GM12878 (cell line): ENCODE measurements at regions of chr21 and their contacts with region 1.

Region 1: DNA sequence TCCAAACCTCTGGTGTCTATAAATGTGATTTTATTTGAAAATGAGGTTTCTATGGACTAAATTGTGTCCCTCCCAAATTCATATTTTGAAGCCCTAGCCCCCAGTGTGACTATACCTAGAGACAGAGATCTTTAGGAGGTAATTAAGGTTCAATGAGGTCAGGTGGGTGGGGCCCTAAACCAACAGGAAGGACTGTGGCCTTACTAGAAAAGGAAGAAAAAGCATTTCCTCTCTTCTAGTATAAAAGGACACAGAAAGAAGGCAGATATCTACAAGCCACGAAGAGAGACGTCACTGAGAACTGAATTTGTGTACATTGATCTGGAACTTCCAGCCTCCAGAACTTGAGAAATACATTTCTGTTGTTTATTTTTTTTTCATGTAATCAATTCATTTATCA is 123.1 kb upstream of the RUNX1 start:
- DNase-seq: no peak
- ATAC-seq: no peak
- H3K4me3 ChIP-seq: no peak overlapping the region
- H3K27ac ChIP-seq: no peak overlapping the region
- H3K4me1 ChIP-seq: no peaks in the 10 kb centered on the region
- H3K27me3 ChIP-seq: no peaks in the 10 kb centered on the region
- CTCF ChIP-seq: no peak
- EP300 ChIP-seq: no peak
- POLR2A ChIP-seq: no peak
- RAD21 ChIP-seq: no peak

Region 2: DNA sequence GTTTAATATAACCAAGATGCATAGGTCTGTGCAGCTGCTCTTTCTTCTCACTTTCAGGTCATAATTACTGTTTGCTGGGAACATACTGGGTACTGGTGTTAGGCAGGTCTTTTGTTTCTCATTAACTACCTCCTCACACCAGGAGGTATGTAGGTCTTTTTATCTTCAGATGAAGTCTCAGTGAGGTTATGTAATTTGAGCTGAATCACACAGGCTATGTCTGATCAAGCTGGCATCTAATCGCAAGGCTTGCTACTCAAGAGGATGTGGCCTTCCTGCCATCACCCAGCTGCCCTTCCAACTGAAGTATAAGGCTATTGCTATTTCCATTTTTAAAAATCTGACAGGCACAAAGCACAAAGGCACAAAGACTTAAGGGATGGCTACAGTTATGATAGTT is 219.5 kb before region 1 on chr21:
- CTCF ChIA-PET with region 1: no interaction called
- POLR2A ChIA-PET with region 1: no interaction called
- RAD21 ChIA-PET with region 1: no interaction called
- SMC1A ChIA-PET with region 1: no interaction called
- in situ Hi-C with region 1: no loop called
- intact Hi-C with region 1: no loop called
- DNase-seq: no peak
- ATAC-seq: no peak
- H3K4me3 ChIP-seq: no peak overlapping the region
- H3K27ac ChIP-seq: no peak overlapping the region
- H3K4me1 ChIP-seq: no peaks in the 10 kb centered on the region
- H3K27me3 ChIP-seq: no peaks in the 10 kb centered on the region
- CTCF ChIP-seq: no peak
- EP300 ChIP-seq: no peak
- POLR2A ChIP-seq: no peak
- RAD21 ChIP-seq: no peak

Region 3: GRCh38 chr21:35051287-35051818 is 120.9 kb before region 1 on chr21:
- CTCF ChIA-PET with region 1: no interaction called
- POLR2A ChIA-PET with region 1: no interaction called
- RAD21 ChIA-PET with region 1: no interaction called
- SMC1A ChIA-PET with region 1: no interaction called
- in situ Hi-C with region 1: no loop called
- intact Hi-C with region 1: no loop called
- DNase-seq: no peak
- ATAC-seq: peak; percentile 34; the same call in 2 of the 3 replicates
- H3K4me3 ChIP-seq: no peak overlapping the region
- H3K27ac ChIP-seq: peak overlapping the region; percentile 23; the same call in 1 of the 2 replicates
- H3K4me1 ChIP-seq: peaks cover 41% of the 10 kb centered on the region
- H3K27me3 ChIP-seq: peaks cover 0 to 1% of the 10 kb centered on the region in 2 experiments; a peak in 1 of 4 replicates
- CTCF ChIP-seq: peak; percentile 16 to 32 (median 31); a peak in 4 of 6 replicates
- EP300 ChIP-seq: no peak
- POLR2A ChIP-seq: no peak
- RAD21 ChIP-seq: peak; percentile 69

Region 4: DNA sequence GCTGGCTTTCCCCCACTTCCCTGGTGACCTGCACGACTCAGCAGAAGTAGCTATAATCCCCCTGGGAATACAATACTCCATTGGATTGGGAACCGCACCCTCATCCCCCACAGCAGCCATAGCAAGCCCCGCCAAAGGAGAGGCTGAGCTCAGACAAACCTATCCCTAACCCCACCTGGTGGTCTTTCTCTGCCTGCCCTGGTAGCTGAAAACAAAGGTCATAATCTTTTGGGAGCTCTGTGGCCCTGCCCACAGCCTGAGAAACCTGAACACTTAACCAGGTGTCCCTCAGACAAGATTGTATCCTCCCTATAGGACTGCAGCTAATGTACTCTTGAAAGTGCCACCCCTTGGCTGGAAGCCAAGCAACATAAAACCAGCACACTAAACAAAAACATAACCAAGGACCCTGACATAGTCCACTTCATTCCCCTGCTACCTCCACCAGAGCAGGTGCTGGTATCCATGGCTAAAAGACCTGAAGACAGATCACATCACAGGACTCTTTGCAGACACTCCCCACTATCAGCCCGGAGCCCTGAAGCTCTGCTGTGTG is 51.5 kb before region 1 on chr21:
- CTCF ChIA-PET with region 1: no interaction called
- POLR2A ChIA-PET with region 1: no interaction called
- RAD21 ChIA-PET with region 1: no interaction called
- SMC1A ChIA-PET with region 1: no interaction called
- in situ Hi-C with region 1: loop called (anchors 5 kb)
- intact Hi-C with region 1: no loop called
- DNase-seq: no peak
- ATAC-seq: no peak
- H3K4me3 ChIP-seq: no peak overlapping the region
- H3K27ac ChIP-seq: no peak overlapping the region
- H3K4me1 ChIP-seq: no peaks in the 10 kb centered on the region
- H3K27me3 ChIP-seq: no peaks in the 10 kb centered on the region; a peak in 1 of 4 replicates
- CTCF ChIP-seq: no peak
- EP300 ChIP-seq: no peak
- POLR2A ChIP-seq: no peak
- RAD21 ChIP-seq: no peak

Region 5: DNA sequence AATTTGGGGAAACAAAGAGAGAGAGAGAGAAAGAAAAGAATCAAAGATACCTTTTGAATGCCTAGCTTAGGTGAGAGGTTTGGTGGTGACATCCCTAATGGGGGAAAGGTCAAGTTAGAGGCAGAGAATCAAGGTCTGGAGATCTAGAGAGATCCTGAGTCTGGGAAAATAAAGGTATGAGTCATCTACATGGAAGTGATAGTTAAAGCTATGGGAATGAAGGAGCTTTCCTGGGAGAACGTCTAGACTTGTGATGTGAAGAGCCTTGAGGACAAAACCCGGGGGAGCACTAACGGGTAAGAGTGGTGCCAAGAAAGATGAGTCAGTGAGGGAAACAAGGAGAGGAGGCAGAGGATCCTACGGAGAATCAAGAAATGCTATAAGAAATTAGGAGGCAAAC is 12.3 kb before region 1 on chr21:
- CTCF ChIA-PET with region 1: no interaction called
- POLR2A ChIA-PET with region 1: no interaction called
- RAD21 ChIA-PET with region 1: no interaction called
- SMC1A ChIA-PET with region 1: no interaction called
- in situ Hi-C with region 1: no loop called
- intact Hi-C with region 1: no loop called
- DNase-seq: no peak
- ATAC-seq: no peak
- H3K4me3 ChIP-seq: no peak overlapping the region
- H3K27ac ChIP-seq: no peak overlapping the region
- H3K4me1 ChIP-seq: no peaks in the 10 kb centered on the region
- H3K27me3 ChIP-seq: no peaks in the 10 kb centered on the region
- CTCF ChIP-seq: no peak
- EP300 ChIP-seq: no peak
- POLR2A ChIP-seq: no peak
- RAD21 ChIP-seq: no peak